IMR-90 (cell line): ENCODE measurements at regions of chr1 and their contacts with region 1.

Region 1: DNA sequence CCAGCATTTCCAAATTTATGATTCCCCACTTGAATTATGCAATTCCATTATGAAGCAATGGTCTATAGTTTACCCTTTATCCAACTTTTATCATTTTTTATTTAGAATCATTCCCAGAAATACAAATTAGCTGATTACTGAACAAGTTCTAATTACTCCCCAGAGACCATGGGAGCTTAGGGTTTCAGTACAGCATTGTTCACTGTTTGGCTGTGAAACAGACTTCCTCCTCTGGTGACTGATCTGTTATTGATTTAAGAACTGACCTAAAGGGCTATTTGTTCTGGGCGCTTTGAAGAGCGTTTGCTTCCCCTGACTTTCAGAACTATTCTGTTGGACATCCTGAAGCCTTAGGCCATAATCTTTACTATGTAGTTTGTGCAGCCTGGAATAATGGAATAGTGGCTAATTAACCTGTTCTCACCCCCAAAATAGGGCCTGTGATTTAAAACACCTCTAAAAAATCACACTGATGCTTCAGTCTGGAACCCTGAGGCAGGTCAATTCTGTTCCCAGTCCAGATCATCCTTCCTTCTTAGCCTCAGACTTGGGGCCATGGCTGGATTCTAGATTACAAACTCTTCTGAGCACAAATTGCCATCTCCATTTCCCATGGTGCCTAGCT is 58.7 kb downstream of the ALG14 start:
- DNase-seq: no peak
- ATAC-seq: no peak
- H3K4me3 ChIP-seq: no peak overlapping the region
- H3K27ac ChIP-seq: no peak overlapping the region
- H3K4me1 ChIP-seq: peaks cover 9% of the 10 kb centered on the region
- H3K27me3 ChIP-seq: no peaks in the 10 kb centered on the region
- CTCF ChIP-seq: no peak
- POLR2A ChIP-seq: no peak
- RAD21 ChIP-seq: no peak

Region 2: GRCh38 chr1:94971491-94971924 is 42.6 kb before region 1 on chr1:
- CTCF ChIA-PET with region 1: interaction called, 3 read pairs
- POLR2A ChIA-PET with region 1: no interaction called
- dilution Hi-C with region 1: no loop called
- in situ Hi-C with region 1: no loop called
- intact Hi-C with region 1: loop called (anchors 5 kb)
- DNase-seq: peak; percentile 85
- ATAC-seq: peak; percentile 64
- H3K4me3 ChIP-seq: no peak overlapping the region
- H3K27ac ChIP-seq: peak overlapping the region; percentile 54
- H3K4me1 ChIP-seq: peaks cover 14% of the 10 kb centered on the region
- H3K27me3 ChIP-seq: no peaks in the 10 kb centered on the region
- CTCF ChIP-seq: no peak
- POLR2A ChIP-seq: no peak
- RAD21 ChIP-seq: no peak

Region 3: DNA sequence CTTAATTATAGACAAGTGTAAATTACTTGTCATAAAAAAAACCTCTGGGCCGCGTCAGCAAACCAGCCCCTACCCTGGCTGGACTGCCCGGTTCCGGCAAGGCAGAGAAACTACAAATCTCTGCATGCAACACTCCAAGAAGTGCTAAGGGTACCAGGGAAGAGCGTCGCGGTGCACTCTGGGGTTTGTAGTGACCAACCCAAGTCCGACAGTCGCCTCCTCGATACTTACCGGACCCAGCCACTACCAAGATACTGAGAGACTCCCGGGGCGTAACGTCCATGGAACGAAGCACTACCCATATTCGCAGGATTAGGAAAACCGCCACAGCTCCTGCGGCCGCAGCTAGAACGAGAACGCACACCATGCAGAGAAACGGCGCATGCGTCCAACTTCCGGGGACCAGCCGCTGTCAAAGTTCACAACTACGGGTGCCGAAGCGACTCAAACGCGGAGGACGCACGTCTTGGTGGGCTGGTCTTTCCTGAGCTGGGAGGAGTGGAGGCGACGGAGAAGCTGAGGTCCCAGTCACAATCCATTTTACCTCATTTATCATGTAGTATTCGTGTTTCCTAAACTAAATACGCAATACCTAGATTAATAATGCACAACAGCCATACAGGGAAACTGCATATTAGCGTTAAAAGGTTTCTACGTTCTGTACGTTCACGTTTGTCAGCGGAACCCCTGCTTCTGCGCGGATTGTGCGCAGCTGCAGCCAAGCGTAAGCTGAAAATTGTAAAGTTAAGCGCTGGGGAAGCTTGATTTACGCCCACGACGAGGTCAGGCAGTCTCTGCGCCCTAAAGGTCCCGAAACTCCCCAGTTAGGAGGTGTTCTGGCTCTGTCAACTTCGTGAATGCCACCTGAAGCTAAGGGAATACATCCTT is 58.7 kb after region 1 on chr1 and contains the start of gene ALG14:
- CTCF ChIA-PET with region 1: no interaction called
- POLR2A ChIA-PET with region 1: no interaction called
- dilution Hi-C with region 1: no loop called
- in situ Hi-C with region 1: no loop called
- intact Hi-C with region 1: no loop called
- DNase-seq: peak; percentile 96
- ATAC-seq: peak; percentile 98
- H3K4me3 ChIP-seq: peak within 1 kb of the TSS; percentile 67
- H3K27ac ChIP-seq: peak within 1 kb of the TSS; percentile 97
- H3K4me1 ChIP-seq: peaks cover 2% of the 10 kb centered on the region; the same call in 1 of the 2 replicates
- H3K27me3 ChIP-seq: no peaks in the 10 kb centered on the region
- CTCF ChIP-seq: no peak
- POLR2A ChIP-seq: peak; percentile 34; the same call in 1 of the 2 replicates
- RAD21 ChIP-seq: no peak; the same call in 1 of the 2 replicates
- total RNA-seq, gene ALG14: 1.4 and 2.0 TPM in 2 replicates